GM12878 (cell line): ENCODE measurements at regions of chr12 and their contacts with region 1.

Region 1: DNA sequence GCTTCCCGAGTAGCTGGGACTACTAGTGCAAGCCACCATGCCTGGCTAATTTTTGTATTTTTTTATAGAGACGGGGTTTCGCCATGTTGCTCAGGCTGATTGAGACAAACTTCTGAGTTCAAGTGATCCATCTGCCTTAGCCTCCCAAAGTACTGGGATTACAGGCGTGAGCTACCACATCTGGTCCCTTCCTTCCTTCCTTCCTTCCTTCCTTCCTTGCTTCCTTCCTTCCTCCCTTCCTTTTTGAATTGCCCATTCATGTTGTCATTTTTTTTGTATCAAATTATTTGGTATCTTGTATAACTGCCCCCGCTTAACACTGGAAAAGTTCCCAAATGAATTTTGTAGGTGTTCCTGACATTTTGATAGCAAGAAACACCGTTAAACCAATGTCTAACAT is 11.7 kb downstream of the RAD9B start:
- DNase-seq: no peak
- ATAC-seq: no peak
- H3K4me3 ChIP-seq: no peak overlapping the region
- H3K27ac ChIP-seq: no peak overlapping the region
- H3K4me1 ChIP-seq: no peaks in the 10 kb centered on the region
- H3K27me3 ChIP-seq: no peaks in the 10 kb centered on the region
- CTCF ChIP-seq: no peak
- EP300 ChIP-seq: no peak
- POLR2A ChIP-seq: no peak
- RAD21 ChIP-seq: no peak

Region 2: DNA sequence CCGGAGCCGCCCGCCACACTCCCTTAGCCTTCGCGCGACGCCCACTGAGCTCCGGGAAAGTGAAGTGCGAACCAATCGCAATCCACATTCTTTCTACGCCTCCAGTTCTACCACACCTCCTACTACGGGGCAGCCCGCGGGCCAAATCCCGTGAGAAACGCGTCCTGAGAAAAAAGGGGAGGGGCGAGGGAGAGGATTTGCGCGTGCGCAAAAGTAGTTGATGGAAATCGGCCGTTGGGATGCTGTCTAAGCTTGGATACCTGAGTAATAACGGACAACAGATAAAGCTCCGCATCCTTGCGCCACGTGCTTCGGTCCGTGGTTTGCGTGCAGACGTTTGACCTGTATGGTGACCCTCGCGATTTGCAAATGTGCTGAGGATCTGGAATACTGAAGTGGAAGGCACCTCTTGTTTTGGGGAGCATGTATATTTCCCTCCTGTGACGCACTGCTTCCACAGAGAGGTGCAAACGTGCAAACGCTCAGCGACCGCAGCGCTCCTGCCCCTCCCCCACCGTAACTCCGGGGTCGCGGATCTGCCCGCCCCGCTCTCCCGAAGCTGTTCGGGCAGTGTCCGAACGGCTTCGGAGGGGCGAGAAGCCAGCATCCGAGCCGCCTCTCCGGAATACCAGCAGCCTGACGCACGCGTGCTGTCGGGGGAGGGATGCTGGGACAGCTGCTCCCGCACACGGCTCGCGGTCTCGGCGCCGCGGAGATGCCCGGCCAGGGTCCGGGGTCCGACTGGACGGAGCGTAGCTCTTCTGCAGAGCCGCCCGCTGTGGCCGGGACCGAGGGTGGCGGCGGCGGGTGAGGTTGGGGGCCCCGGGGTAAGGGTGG is 45.4 kb before region 1 on chr12 and contains the starts of genes FAM216A and GPN3:
- CTCF ChIA-PET with region 1: interaction called, 8 read pairs
- POLR2A ChIA-PET with region 1: interaction called, 4 read pairs
- RAD21 ChIA-PET with region 1: interaction called, 28 read pairs
- SMC1A ChIA-PET with region 1: interaction called, 18 read pairs
- in situ Hi-C with region 1: no loop called
- intact Hi-C with region 1: no loop called
- DNase-seq: peak; percentile 96
- ATAC-seq: peak; percentile 88
- H3K4me3 ChIP-seq: peak within 1 kb of the TSS; percentile 73
- H3K27ac ChIP-seq: peak within 1 kb of the TSS; percentile 91
- H3K4me1 ChIP-seq: peaks cover 6% of the 10 kb centered on the region
- H3K27me3 ChIP-seq: no peaks in the 10 kb centered on the region
- CTCF ChIP-seq: no peak
- EP300 ChIP-seq: no peak
- POLR2A ChIP-seq: peak; percentile 91
- RAD21 ChIP-seq: no peak
- polyA plus RNA-seq, gene FAM216A: 15.0 to 36.0 TPM
- polyA plus RNA-seq, gene GPN3: 76.9 to 78.7 TPM

Region 3: DNA sequence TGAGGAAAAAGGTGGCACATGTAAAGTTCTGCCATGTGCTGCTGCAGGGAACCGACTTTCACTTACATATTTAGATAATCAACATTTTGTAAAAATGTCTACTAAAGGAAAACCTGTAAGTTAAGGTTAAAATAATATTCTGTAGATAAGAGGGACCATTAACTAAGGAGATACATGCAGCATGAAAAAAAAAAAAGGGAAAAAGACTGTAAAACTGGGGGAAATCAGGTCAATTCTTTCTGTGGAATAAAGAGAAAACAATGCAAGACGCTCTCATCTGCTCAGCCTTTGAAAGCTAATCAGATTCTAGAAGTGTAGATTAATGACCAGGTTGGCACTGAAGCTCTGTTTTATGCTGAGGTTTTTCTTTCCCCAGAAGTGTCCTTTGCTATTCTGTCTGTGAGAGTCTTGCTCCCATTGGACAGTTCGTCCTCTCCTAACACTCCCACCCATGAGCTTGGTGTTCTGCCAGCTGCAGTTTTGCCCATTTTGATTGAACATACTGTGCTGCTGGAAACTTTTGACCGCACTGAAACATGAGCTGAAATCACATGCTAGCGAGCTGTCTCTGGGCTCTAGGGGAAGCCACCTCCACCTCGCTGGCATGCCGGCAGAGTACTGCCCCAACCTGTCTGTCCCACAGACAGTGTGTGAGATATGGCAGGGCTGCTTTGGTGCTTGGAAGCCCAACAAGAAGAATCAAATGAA is 29.6 kb after region 1 on chr12:
- CTCF ChIA-PET with region 1: interaction called, 11 read pairs
- POLR2A ChIA-PET with region 1: interaction called, 4 read pairs
- RAD21 ChIA-PET with region 1: interaction called, 13 read pairs
- SMC1A ChIA-PET with region 1: interaction called, 23 read pairs
- in situ Hi-C with region 1: no loop called
- intact Hi-C with region 1: loop called (anchors 5 kb)
- DNase-seq: peak; percentile 90
- ATAC-seq: peak; percentile 92
- H3K4me3 ChIP-seq: no peak overlapping the region; the same call in 1 of the 2 replicates
- H3K27ac ChIP-seq: peak overlapping the region; percentile 94
- H3K4me1 ChIP-seq: peaks cover 28% of the 10 kb centered on the region
- H3K27me3 ChIP-seq: no peaks in the 10 kb centered on the region
- CTCF ChIP-seq: no peak
- EP300 ChIP-seq: peak in 1 of 2 experiments; percentile 53; a peak in 1 of 4 replicates
- POLR2A ChIP-seq: 0 out of 2 replicates have a peak, but pooled peaks have one; percentile 26
- RAD21 ChIP-seq: no peak

Region 4: DNA sequence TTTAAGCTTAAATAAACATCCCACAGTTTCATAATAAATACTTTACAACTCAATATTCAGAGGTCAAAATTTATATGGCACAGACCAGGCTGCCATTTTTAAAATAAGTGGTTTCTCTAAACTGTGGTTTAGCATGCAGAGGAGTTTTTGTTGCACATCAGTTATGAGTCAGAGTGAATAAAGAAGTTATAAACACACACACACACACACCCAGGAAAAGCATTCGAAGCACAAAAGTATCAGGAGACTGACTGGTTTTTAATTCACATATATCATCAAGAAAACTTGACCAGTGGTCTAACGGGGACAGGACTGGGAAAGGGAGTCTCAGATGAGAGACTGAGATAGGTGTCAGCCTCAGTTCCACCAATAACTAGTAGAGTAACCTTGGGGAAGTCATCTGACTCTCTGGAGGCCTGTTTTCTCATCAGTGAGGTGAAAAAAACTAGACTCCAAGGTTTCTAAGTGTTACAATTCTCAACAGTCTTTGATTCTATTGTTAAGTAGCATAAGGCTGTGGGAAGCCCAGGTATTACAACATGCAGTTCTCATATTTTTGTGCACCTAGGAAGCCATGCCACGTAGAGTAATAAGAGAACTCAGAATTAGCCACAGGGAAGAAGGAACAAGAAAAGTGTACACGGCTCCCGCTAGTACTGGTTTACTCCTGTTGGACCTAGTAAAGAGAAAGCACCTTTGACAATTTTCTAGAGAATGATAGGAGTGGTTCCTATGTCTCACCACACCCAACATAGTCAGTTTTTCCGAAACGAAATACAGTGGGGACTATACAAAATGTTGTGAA is 64.1 kb after region 1 on chr12:
- CTCF ChIA-PET with region 1: interaction called, 5 read pairs
- POLR2A ChIA-PET with region 1: interaction called, 7 read pairs
- RAD21 ChIA-PET with region 1: interaction called, 14 read pairs
- SMC1A ChIA-PET with region 1: interaction called, 25 read pairs
- in situ Hi-C with region 1: no loop called
- intact Hi-C with region 1: no loop called
- DNase-seq: peak; percentile 84
- ATAC-seq: peak; percentile 45
- H3K4me3 ChIP-seq: peak overlapping the region; percentile 82
- H3K27ac ChIP-seq: peak overlapping the region; percentile 95
- H3K4me1 ChIP-seq: peaks cover 12% of the 10 kb centered on the region
- H3K27me3 ChIP-seq: no peaks in the 10 kb centered on the region
- CTCF ChIP-seq: no peak
- EP300 ChIP-seq: peak; percentile 67 to 76; a peak in 2 of 4 replicates
- POLR2A ChIP-seq: no peak
- RAD21 ChIP-seq: no peak

Region 5: DNA sequence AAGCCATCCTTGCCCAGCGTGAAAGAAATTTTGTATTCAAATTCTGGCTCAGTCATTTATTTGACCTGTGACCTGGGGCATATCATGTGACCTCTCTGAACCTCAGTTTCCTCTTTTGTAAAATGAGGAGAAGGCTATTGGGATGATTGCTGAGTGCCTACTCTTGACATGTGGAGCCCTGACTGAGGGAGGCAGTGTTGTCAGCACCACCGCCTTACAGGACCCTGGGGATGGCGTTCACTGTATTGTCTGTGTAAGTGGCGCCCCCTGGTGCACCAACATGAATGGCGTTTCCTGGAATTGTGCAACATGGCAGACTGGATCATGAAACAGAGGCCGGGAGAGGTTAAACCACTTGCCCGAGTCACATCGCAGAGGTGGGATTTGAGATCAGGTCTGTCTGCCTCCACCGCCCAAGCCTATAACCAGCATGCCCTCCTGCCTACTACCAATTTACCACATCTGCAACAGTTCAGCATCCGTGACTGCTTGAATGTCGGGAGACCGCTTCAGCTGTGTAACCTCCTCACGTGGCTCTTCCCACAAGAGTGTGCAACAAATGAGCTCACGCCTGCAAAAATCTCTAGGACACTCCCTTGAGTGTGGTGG is 312.9 kb after region 1 on chr12:
- CTCF ChIA-PET with region 1: interaction called, 15 read pairs
- POLR2A ChIA-PET with region 1: no interaction called
- RAD21 ChIA-PET with region 1: no interaction called
- SMC1A ChIA-PET with region 1: interaction called, 3 read pairs
- in situ Hi-C with region 1: no loop called
- intact Hi-C with region 1: loop called (anchors 5 kb)
- DNase-seq: peak; percentile 70
- ATAC-seq: peak; percentile 99
- H3K4me3 ChIP-seq: no peak overlapping the region
- H3K27ac ChIP-seq: no peak overlapping the region
- H3K4me1 ChIP-seq: peaks cover 10% of the 10 kb centered on the region; the same call in 1 of the 2 replicates
- H3K27me3 ChIP-seq: no peaks in the 10 kb centered on the region
- CTCF ChIP-seq: peak; percentile 89 to 99 (median 97)
- EP300 ChIP-seq: no peak
- POLR2A ChIP-seq: no peak
- RAD21 ChIP-seq: peak; percentile 98